ENCODE measurements at regions of chrX and their contacts with region 1.

Region 1: GRCh38 chrX:118807151-118808017 is 16.2 kb upstream of the ZCCHC12 start:
- DNase-seq: peak; percentile 47
- CTCF ChIP-seq: peak; percentile 71

Region 2: DNA sequence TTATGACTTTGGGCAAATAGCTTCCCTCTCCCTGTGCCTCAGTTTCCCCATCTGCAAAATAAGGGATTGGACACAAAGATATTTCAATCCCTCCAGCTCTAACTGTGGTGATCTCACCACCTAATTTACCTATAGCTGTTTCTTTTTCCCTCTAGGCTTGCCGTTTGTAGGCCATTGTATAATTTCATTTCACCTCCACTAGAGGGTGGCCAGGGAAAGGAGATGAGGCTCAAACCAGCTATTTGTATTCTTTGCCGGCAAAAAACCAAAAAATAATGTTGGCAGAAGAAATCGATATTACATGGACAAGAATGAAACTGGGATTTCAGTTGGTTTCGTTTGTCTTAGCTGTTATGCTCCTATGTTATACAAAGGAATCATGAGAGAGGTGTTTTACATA is 347.9 kb before region 1 on chrX:
- in situ Hi-C with region 1: loop called (anchors 25 kb)
- DNase-seq: peak; percentile 25
- CTCF ChIP-seq: peak; percentile 58

Region 3: DNA sequence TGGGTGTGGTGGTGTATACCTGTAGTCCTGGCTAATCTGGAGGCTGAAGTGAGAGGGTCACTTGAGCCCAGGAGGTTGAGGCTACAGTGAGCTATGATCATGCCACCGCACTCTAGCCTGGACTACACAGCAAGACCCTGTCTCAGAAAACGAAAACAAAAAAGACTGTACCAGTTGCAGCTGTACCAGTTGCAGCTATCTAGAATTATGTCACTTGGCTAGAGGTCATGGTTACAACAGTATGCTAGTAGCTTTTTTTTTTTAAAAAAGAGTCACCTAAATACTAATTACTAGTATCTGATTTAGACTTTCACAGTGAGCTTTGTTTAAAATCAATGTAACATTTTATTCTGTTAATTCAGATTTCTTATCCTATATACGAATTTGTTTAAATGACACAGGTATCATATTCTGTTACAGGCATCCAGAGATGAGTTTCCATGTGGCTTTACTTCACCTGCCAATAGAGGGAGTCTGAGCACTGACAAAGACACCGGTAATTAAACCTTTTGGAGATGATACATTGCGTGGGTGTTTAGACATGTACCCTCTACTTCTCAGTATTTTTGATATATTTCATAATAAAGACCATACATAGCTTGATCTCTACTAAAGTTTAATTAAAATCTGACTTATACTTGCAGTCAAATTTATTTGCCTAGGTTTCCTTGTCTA is 180.2 kb before region 1 on chrX:
- in situ Hi-C with region 1: loop called (anchors 10 kb)
- DNase-seq: peak; percentile 11
- CTCF ChIP-seq: peak; percentile 42